Transverse colon (tissue), 4 donors: ENCODE measurements at regions of chr17 and their contacts with region 1.

Region 1: DNA sequence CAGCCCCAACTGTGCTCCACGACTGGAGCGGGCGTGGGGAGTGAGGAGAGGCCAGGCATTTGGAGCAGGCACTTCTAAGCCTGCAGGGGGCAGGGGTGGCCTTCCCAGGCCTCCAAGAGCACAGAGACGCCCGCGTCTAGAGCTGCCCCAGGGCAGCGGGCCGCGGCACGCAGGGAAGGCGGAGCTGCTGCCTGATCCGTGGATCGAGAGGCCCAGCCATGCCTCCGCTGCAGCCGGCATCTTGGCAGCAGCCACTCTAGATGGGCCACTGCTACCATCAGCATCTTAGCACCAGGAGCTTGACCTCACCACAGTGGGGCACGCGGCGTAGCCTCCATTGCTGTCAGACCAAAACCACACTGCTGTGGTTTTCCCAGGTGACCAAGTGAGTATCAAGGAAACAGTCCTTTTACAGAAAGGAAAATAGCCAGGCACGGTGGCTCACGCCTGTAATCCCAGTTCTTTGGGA is 20.4 kb upstream of the WDR45B start:
- DNase-seq: peak; percentile 79
- H3K4me3 ChIP-seq: no peak overlapping the region
- H3K27ac ChIP-seq: peak overlapping the region; percentile 15 to 45 (median 26)
- H3K4me1 ChIP-seq: peaks cover 4 to 17% (median 7%) of the 10 kb centered on the region in 4 donors
- H3K27me3 ChIP-seq: no peaks in the 10 kb centered on the region
- CTCF ChIP-seq: peak; percentile 56 to 75 (median 61)
- EP300 ChIP-seq: no peak
- POLR2A ChIP-seq: no peak

Region 2: DNA sequence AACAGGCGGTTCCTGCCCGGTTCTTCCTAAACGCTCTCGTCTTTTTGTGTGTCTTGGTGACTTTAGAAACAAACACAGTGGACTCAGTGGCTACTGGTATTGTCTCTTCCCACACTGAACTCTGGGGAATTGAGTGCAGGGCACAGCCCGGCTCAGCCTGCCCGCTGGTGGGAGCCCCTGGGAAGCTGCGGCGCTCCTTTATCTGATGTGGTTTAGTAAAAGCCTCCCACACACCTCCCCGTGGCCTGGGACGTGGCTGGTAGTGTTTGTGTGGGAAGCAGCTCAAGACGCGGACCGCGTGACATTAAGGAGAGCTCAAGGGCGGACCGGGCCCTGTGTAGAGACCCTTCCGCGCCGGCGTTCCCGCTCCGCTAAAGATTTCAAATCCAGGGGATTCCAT is 1558.7 kb before region 1 on chr17:
- in situ Hi-C with region 1: no loop called
- intact Hi-C with region 1: no loop called
- DNase-seq: no peak
- H3K4me3 ChIP-seq: no peak overlapping the region
- H3K27ac ChIP-seq: no peak overlapping the region
- H3K4me1 ChIP-seq: no peaks in the 10 kb centered on the region
- H3K27me3 ChIP-seq: no peaks in the 10 kb centered on the region
- CTCF ChIP-seq: no peak
- EP300 ChIP-seq: no peak
- POLR2A ChIP-seq: no peak

Region 3: DNA sequence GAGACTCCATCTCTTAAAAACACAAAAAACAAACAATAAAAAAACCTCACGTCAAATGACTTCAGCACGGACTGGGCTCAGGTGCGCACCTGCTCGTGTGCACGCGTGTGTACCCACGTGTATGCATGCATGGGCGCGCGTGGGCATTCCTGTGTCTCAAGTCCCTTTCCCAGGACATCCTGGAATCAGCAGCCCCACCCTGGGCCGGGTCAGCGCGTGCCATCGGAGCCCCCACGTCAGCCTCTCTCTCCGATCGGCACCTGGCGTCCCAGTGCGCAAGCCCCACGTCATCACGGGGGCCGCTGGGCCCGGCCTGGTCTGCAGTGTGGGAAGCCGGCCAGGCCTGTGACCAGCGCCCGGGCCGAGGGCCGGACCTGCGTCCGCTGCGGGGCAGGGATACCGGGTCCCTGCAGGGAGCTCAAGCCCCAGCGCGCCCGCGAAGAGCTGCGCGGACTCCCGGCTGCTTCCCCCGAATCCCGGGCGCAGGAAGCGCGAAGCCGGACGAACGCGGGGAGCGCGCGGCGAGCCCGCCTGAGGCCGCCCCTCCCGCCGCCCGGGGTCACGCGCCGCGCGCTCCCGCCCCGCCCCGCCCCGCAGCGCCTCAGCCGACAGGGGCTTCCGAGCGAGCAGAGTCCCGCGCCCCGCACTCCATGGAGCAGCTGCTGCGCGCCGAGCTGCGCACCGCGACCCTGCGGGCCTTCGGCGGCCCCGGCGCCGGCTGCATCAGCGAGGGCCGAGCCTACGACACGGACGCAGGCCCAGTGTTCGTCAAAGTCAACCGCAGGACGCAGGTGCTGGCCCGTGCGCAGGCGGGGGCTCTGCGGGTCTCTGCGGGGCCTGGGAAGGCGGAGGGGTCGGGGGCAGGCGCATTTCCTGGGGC is 66.6 kb after region 1 on chr17 and contains the start of gene FN3K:
- in situ Hi-C with region 1: no loop called
- intact Hi-C with region 1: loop called (anchors 2 kb)
- DNase-seq: peak; percentile 73
- H3K4me3 ChIP-seq: peak within 1 kb of the TSS; percentile 67 to 83 (median 72)
- H3K27ac ChIP-seq: peak within 1 kb of the TSS; percentile 77 to 89 (median 84)
- H3K4me1 ChIP-seq: peaks cover 0 to 14% (median 12%) of the 10 kb centered on the region in 4 donors
- H3K27me3 ChIP-seq: no peaks in the 10 kb centered on the region
- CTCF ChIP-seq: no peak
- EP300 ChIP-seq: peak; percentile 68
- POLR2A ChIP-seq: peak; percentile 43
- total RNA-seq, gene FN3K: 11.2 to 33.0 (median 26.2) TPM

Region 4: DNA sequence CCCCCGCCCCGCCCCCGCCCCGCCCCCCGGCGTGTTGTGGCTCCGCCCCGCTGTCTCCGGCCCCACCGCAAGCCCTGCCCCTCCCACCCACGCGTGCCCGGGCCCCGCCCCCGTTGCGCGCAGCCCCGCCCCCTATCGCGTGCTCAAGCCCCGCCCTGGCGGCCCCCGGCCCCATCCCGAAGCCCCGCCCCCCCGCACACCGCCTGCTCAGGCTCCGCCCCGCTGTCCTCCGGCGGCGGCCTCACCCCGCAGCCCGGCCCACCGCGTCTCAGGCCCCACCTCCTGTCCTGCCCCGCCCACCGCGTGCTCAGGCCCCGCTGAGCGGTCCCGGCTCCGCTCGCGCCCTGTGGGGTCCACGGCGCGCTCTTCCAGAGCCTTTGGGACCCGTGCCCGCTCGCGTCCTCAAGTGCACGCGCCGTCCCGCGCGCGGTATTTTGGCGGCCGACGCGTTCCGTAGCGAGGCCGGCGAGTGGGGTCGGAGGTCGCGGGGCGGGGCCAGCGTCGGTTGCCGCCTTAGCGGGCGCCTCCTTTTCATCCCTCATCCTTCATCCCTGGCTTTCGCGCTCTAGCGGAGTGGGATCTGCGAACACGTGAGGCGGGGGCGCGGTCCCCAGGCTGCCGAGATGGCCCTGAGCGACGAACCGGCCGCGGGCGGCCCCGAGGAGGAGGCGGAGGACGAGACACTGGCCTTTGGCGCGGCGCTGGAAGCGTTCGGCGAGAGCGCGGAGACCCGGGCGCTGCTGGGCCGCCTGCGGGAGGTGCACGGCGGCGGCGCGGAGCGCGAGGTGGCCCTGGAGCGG is 83.1 kb after region 1 on chr17 and contains the start of gene TBCD:
- in situ Hi-C with region 1: loop called in 1 of 4 experiments (anchors 25 kb)
- intact Hi-C with region 1: no loop called
- DNase-seq: peak; percentile 89
- H3K4me3 ChIP-seq: peak within 1 kb of the TSS; percentile 75 to 99 (median 86)
- H3K27ac ChIP-seq: peak within 1 kb of the TSS; percentile 89 to 93 (median 91)
- H3K4me1 ChIP-seq: peaks cover 8 to 23% (median 17%) of the 10 kb centered on the region in 4 donors
- H3K27me3 ChIP-seq: no peaks in the 10 kb centered on the region
- CTCF ChIP-seq: no peak
- EP300 ChIP-seq: peak; percentile 39
- POLR2A ChIP-seq: peak; percentile 27
- total RNA-seq, gene TBCD: 38.6 to 104 (median 39.8) TPM

Region 5: GRCh38 chr17:82767041-82767754 is 98.5 kb after region 1 on chr17:
- in situ Hi-C with region 1: loop called in 3 of 4 experiments (anchors 5 to 25 kb)
- intact Hi-C with region 1: loop called (anchors 10 kb)
- DNase-seq: peak; percentile 72
- H3K4me3 ChIP-seq: no peak overlapping the region
- H3K27ac ChIP-seq: peak overlapping the region in 1 of 4 donors; percentile 40
- H3K4me1 ChIP-seq: peaks cover 0 to 21% (median 3%) of the 10 kb centered on the region in 4 donors
- H3K27me3 ChIP-seq: no peaks in the 10 kb centered on the region
- CTCF ChIP-seq: peak; percentile 58 to 74 (median 69)
- EP300 ChIP-seq: no peak
- POLR2A ChIP-seq: no peak

Region 6: GRCh38 chr17:82775001-82775823 is 106.5 kb after region 1 on chr17:
- in situ Hi-C with region 1: loop called in 1 of 4 experiments (anchors 25 kb)
- intact Hi-C with region 1: loop called (anchors 10 kb)
- DNase-seq: peak; percentile 76
- H3K4me3 ChIP-seq: peak overlapping the region in 1 of 4 donors; percentile 27
- H3K27ac ChIP-seq: no peak overlapping the region
- H3K4me1 ChIP-seq: peaks cover 7 to 22% (median 9%) of the 10 kb centered on the region in 4 donors
- H3K27me3 ChIP-seq: no peaks in the 10 kb centered on the region
- CTCF ChIP-seq: peak; percentile 84 to 94 (median 89)
- EP300 ChIP-seq: no peak
- POLR2A ChIP-seq: no peak